BJ (cell line): ENCODE measurements at regions of chr15 and their contacts with region 1.

Region 1: DNA sequence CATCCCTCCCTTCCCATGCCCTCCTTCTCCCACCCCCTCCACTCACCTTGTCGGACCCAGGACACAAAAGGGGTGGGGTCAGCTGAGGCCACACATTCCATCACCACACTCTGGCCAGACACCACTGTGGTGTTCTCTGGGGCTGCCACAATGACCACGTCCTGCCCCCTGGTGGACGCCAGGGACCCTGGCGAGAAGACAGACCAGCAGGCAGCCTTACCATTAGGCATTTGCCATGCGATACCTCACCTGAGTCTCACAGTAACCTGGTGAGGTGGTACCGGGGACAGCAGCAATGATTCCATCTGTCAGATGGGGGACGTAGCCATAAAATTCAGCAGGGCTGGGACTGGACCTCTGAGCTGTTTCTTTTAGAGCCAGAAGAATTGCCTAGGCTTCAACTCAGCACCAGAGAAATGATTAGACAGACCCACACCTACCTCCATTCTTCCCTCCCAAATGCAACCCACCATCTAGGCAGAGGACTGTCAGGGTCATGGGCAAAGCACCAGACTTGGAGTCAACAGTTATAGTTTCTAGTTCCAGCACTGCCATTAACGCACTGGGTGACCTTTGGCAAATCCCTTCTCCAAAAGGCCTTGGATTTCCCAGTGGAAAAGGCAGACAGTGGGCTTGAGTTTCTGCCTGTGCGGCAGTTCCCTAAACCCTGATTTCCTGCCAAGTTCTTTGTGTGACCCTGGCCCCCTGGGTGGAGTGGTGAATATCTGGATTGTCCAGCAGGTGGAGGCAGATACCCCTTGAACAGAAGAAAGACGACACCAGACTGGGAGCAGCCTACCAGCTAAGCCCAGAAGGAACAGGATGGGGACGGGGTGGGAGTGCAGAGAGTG is 21.8 kb downstream of the IGDCC4 start:
- DNase-seq: no peak
- H3K4me3 ChIP-seq: no peak overlapping the region
- H3K27me3 ChIP-seq: no peaks in the 10 kb centered on the region; the same call in 1 of the 2 replicates
- CTCF ChIP-seq: peak; percentile 91

Region 2: GRCh38 chr15:65217526-65218482 is 183.2 kb before region 1 on chr15:
- CTCF ChIA-PET with region 1: no interaction called
- POLR2A ChIA-PET with region 1: no interaction called
- DNase-seq: no peak
- H3K4me3 ChIP-seq: no peak overlapping the region
- H3K27me3 ChIP-seq: peaks cover under 1% of the 10 kb centered on the region; the same call in 1 of the 2 replicates
- CTCF ChIP-seq: no peak

Region 3: GRCh38 chr15:65312400-65312916 is 88.5 kb before region 1 on chr15:
- CTCF ChIA-PET with region 1: interaction called, 84 read pairs
- POLR2A ChIA-PET with region 1: no interaction called
- DNase-seq: no peak
- H3K4me3 ChIP-seq: no peak overlapping the region
- H3K27me3 ChIP-seq: peaks cover 7% of the 10 kb centered on the region
- CTCF ChIP-seq: no peak

Region 4: GRCh38 chr15:65326117-65326526 is 74.9 kb before region 1 on chr15:
- CTCF ChIA-PET with region 1: interaction called, 84 read pairs
- POLR2A ChIA-PET with region 1: no interaction called
- DNase-seq: no peak
- H3K4me3 ChIP-seq: no peak overlapping the region
- H3K27me3 ChIP-seq: peaks cover 11% of the 10 kb centered on the region
- CTCF ChIP-seq: no peak

Region 5: DNA sequence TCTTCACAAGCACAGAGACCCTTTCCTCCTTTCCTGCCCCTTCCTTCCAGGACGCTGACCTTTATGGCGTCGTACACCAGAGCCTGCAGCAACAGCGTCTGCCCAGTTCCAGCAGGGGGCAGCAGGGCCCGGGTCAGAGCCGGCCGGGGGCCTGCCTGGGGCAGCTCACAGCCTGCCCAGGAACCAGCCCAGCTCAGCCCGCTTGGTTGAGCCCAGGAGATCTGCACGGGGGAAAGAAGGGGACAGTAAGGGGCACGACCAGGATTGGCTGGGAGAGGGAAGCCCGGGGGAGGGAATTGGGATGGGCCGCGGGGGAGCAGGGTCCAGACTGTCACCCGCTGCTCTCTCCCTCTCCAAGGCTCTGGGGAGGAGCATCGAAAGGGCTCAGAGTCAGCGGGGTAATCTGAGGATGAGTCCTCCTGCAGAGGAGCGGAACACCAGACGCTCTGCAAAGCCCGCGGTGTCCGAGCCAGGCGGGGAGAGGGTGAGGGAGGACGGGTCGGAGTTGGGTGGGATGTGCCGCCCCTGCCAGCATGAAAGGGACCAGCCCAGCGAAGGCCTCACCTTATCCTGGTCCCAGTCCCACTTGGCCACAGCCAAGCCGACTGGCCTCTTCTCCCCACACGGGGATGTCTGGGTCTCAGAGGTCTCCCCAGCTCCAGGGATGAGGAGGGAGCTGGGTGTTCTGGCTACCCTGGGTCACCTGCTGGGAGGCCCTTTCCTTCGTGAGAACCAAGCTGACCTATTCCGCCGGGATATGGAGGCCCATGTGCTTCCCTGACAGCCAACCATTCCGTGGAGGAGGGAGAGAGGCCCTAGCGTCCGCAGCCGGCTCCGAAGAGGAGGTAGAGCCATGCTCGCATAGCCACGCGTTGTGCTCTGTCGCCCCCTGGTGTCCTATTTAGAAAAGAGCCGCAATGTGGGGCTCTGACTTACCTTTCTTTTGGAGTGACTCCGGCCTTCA is 15.8 kb before region 1 on chr15:
- CTCF ChIA-PET with region 1: interaction called, 22 read pairs
- POLR2A ChIA-PET with region 1: no interaction called
- DNase-seq: no peak
- H3K4me3 ChIP-seq: no peak overlapping the region
- H3K27me3 ChIP-seq: peaks cover 5% of the 10 kb centered on the region
- CTCF ChIP-seq: peak; percentile 85

Region 6: DNA sequence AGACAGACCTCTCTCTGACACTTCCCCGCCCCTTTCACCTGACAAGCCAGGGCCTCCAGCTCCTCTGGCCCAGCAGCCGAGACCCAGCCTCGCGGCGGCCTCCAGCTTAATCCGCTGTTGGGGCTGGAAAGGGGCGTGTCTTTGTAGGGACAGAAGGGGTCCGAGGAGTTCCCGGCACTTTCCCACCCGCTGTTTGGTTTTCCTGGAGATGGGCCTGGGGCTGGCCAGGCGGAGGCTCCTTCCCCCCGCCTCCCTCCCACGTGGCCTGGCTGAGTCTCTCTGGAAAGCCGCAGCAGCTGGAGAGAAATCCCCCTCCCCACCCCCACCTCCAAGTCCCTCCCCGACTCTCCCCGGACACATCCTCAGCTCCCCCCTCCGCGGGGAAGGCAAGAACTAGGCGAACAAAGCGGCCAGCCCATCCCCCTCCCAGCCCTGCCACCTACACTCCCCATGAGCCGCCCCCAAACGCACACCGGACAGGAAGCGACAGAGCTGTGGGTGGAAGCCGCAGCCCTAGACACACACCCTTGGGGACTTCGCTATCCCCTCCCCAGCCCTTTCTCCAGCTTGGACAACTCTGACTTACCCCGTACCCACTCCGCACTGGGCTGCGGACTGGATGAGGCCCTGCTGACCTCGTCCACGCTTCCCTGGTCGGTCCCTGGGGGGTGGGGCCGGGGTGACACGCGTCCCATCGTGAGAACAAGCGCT is 20.5 kb after region 1 on chr15:
- CTCF ChIA-PET with region 1: interaction called, 50 read pairs
- POLR2A ChIA-PET with region 1: no interaction called
- DNase-seq: no peak
- H3K4me3 ChIP-seq: peak overlapping the region; percentile 55
- H3K27me3 ChIP-seq: peaks cover 19% of the 10 kb centered on the region
- CTCF ChIP-seq: no peak

Region 7: GRCh38 chr15:65757256-65757655 is 356.3 kb after region 1 on chr15:
- CTCF ChIA-PET with region 1: no interaction called
- POLR2A ChIA-PET with region 1: no interaction called
- DNase-seq: no peak
- H3K4me3 ChIP-seq: no peak overlapping the region
- H3K27me3 ChIP-seq: no peaks in the 10 kb centered on the region
- CTCF ChIP-seq: no peak